Activated CD4-positive, alpha-beta memory T cell treated with anti-CD3 and anti-CD28 coated beads, Interleukin-2, amount 10 ng/mL, durations not matched to agents 7 days and 5 days (primary cell): ENCODE measurements at regions of chr17 and their contacts with region 1.

Region 1: DNA sequence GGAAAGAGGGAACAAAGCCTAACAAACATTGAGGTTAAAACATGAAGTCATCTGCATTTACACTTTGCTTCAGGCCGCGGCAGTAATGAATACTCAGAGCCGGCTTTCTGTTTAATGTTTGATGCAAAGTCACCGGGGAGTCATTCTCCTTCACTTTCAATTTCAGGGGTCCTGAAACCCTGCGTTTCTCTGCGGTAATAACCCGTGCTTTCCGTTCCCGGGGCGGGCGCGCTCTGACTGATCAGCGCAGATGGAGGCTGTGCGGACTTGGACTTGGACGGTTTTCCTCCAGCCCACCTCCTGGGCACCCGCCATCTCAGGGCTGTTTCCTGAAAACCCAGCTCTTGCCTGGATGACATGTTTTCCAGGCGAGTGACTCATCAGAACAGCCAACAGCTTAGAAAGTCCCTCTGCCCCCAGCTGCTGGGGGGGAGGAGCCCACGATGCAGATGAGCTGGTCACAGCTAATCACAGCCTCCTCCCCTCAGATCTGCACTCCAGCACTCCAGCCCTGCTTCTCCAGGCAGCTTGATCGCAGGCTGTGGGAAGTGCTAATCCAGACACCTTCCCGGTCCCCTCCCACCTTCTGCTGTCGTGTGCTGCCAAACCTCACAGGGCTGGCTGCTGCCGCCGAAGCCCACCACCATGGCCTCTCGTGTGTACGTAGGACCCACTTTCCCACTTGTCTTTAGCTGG is 158.6 kb upstream of the CHMP6 start:
- DNase-seq: peak; percentile 84
- H3K4me3 Mint-ChIP-seq: peak overlapping the region; percentile 72
- H3K27ac Mint-ChIP-seq: peak overlapping the region; percentile 90
- H3K4me1 Mint-ChIP-seq: peaks cover 66% of the 10 kb centered on the region
- H3K27me3 Mint-ChIP-seq: no peaks in the 10 kb centered on the region

Region 2: DNA sequence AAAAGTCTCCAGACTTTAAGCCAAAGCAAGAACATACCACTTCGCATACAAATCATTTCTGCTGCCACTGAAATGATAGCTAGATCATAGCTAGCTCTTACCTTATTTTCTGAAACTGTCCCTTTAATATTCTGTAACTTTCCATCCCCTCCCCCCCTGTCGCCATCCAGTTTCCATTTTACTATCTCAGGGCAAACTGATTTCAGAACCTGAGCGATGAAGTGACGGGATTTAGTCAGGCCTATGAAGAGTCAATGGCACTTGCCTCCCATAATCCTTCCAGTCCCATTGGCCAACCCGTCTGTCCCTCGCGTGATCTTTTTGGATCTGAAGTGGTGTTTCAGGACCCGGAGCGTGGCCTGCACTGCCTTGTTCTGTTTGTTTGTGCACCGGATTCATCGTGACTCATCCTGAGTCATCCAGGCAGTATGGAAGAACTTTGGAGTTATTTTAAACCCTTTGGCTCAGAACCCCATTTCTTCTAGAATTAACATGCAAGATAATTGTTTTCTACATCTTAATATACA is 41.2 kb before region 1 on chr17:
- CTCF ChIA-PET with region 1: interaction called, 3 read pairs
- POLR2A ChIA-PET with region 1: interaction called, 21 read pairs
- DNase-seq: peak; percentile 66
- H3K4me3 Mint-ChIP-seq: peak overlapping the region; percentile 74
- H3K27ac Mint-ChIP-seq: peak overlapping the region; percentile 97
- H3K4me1 Mint-ChIP-seq: peaks cover 80% of the 10 kb centered on the region
- H3K27me3 Mint-ChIP-seq: no peaks in the 10 kb centered on the region

Region 3: GRCh38 chr17:80817321-80818251 is 15.4 kb before region 1 on chr17:
- CTCF ChIA-PET with region 1: interaction called, 6 read pairs
- POLR2A ChIA-PET with region 1: interaction called, 26 read pairs
- DNase-seq: no peak
- H3K4me3 Mint-ChIP-seq: no peak overlapping the region
- H3K27ac Mint-ChIP-seq: peak overlapping the region; percentile 87
- H3K4me1 Mint-ChIP-seq: peaks cover 86% of the 10 kb centered on the region
- H3K27me3 Mint-ChIP-seq: no peaks in the 10 kb centered on the region

Region 4: GRCh38 chr17:80847496-80848230 is 14.6 kb after region 1 on chr17:
- CTCF ChIA-PET with region 1: interaction called, 6 read pairs
- POLR2A ChIA-PET with region 1: interaction called, 38 read pairs
- DNase-seq: peak; percentile 88
- H3K4me3 Mint-ChIP-seq: peak overlapping the region; percentile 6
- H3K27ac Mint-ChIP-seq: peak overlapping the region; percentile 96
- H3K4me1 Mint-ChIP-seq: peaks cover 77% of the 10 kb centered on the region
- H3K27me3 Mint-ChIP-seq: no peaks in the 10 kb centered on the region

Region 5: GRCh38 chr17:80855948-80856862 is 23.2 kb after region 1 on chr17:
- CTCF ChIA-PET with region 1: interaction called, 6 read pairs
- POLR2A ChIA-PET with region 1: interaction called, 39 read pairs
- DNase-seq: peak; percentile 94
- H3K4me3 Mint-ChIP-seq: peak overlapping the region; percentile 26
- H3K27ac Mint-ChIP-seq: peak overlapping the region; percentile 98
- H3K4me1 Mint-ChIP-seq: peaks cover 91% of the 10 kb centered on the region
- H3K27me3 Mint-ChIP-seq: no peaks in the 10 kb centered on the region

Region 6: GRCh38 chr17:80876950-80877728 is 44.1 kb after region 1 on chr17:
- CTCF ChIA-PET with region 1: no interaction called
- POLR2A ChIA-PET with region 1: interaction called, 14 read pairs
- DNase-seq: peak; percentile 77
- H3K4me3 Mint-ChIP-seq: peak overlapping the region; percentile 72
- H3K27ac Mint-ChIP-seq: peak overlapping the region; percentile 100
- H3K4me1 Mint-ChIP-seq: peaks cover 68% of the 10 kb centered on the region
- H3K27me3 Mint-ChIP-seq: no peaks in the 10 kb centered on the region